Activated B cell treated with CpG ODN at 0.5 μM for 24 hours (primary cell): ENCODE measurements at regions of chr19 and their contacts with region 1.

Region 1: DNA sequence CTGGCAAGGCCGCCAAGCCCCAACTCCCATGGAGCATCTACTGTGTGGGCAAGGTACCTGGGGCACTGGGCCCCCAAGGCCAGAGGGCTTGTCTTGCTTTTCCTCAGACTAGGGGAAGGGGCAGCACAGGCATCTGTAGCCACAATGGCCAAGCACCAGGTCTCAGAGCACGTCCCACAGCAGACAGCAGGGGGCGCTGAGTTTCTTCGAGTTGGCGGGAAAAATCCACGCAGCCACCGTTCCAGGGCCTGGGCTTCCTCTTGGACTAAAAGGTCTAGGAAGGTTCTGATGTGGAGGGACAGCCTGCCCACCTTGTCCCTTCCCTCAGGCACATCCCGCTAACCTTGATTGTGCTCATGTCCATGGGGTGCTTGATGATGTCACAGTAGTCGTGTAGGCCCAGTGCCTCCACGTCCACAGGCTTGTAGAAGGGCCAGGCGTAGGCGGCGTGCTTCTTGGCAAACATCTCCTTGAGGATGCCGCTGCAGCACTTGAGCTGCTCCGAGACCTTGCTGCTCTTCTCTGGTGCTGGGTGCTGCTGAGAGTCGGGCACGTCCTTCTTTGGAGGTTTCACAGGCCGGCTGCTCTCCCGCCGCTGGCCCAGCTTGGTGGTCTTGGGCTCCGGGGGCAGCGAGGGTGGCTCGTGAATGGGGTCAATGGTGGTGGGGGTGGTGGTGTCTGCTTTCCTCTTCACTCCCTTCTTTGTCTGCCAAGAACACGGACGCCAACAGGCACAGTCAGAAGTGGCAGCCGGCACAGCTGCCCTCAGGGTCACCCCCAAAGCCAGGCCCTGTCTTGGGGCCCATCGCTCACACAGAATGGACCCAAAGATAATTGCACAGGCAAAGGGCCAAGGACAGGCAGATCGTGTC is 32.0 kb upstream of the EPHX3 start:
- DNase-seq: peak; percentile 72
- ATAC-seq: peak; percentile 76
- H3K4me3 Mint-ChIP-seq: no peak overlapping the region
- H3K27ac Mint-ChIP-seq: no peak overlapping the region
- H3K4me1 Mint-ChIP-seq: peaks cover 9% of the 10 kb centered on the region
- H3K27me3 Mint-ChIP-seq: no peaks in the 10 kb centered on the region
- CTCF ChIP-seq: peak; percentile 36

Region 2: DNA sequence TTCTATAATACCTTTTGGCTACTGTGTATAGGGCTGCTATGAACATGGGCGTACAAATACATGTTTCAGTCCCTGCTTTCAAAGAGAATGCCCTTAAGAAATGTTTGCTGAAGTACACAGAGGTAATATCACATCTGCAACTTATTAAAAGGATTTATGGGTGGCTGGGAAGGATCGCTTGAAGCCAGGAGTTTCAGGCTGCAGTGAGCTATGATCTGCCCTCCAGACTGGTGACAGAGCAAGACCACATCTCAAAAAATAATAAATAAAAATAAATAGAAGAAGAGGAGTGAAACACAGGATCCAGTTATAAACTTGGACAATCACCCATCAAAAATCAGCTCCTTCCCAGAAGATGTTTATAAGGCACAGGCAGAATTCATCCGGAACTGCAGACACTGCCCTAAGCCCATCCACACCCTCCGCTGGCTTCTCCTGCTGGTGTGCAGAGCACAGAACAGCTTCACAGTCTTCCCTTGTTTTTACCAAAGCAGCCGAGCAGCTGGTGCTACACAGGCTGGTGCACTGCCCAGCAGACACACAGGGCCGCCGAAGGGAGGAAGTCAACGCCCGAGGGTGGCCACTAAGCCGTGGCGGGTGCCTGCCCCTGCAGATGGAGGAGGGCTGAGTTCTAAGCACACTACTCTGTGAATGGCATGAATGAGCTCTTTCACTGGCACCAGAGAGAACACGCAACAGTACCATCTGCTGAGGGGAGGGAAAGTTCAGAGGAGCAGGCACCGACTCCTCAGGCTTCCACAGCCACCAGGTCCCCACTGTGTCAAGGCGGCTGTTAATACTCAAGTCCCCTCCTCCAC is 24.1 kb after region 1 on chr19:
- CTCF ChIA-PET with region 1: interaction called, 3 read pairs
- POLR2A ChIA-PET with region 1: no interaction called
- intact Hi-C with region 1: loop called (anchors 1 kb)
- DNase-seq: peak; percentile 48
- ATAC-seq: peak; percentile 75
- H3K4me3 Mint-ChIP-seq: peak overlapping the region; percentile 72
- H3K27ac Mint-ChIP-seq: peak overlapping the region; percentile 80
- H3K4me1 Mint-ChIP-seq: peaks cover 96% of the 10 kb centered on the region
- H3K27me3 Mint-ChIP-seq: no peaks in the 10 kb centered on the region
- CTCF ChIP-seq: no peak

Region 3: GRCh38 chr19:15452111-15453047 is 188.1 kb after region 1 on chr19:
- CTCF ChIA-PET with region 1: no interaction called
- POLR2A ChIA-PET with region 1: no interaction called
- intact Hi-C with region 1: no loop called
- DNase-seq: no peak
- ATAC-seq: no peak
- H3K4me3 Mint-ChIP-seq: no peak overlapping the region
- H3K27ac Mint-ChIP-seq: no peak overlapping the region
- H3K4me1 Mint-ChIP-seq: peaks cover 17% of the 10 kb centered on the region
- H3K27me3 Mint-ChIP-seq: no peaks in the 10 kb centered on the region
- CTCF ChIP-seq: no peak